ENCODE measurements at regions of chr5 and their contacts with region 1.

Region 1: DNA sequence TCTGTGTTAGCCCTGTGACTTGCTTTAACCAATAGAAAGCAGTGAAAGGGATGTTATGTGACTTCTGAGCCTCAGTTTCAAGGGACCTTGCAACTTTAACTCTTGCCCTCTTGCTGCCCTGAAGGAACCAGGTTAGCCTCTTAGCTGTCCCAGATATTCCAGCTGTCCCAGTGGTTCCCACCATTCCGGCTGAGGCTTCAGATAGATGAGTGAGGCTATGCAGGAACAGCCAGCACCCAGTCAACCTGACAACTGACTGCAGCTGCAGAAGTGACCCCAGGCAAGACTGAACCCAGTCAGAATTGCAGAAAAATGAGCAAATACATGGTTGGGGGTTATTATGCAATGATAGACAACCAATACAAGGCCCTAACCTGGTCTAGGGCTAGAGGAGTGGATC is 10.4 kb upstream of the CDC23 start:
- DNase-seq: no peak
- H3K4me3 ChIP-seq: no peak overlapping the region
- H3K27ac ChIP-seq: no peak overlapping the region
- H3K4me1 ChIP-seq: no peaks in the 10 kb centered on the region
- H3K27me3 ChIP-seq: no peaks in the 10 kb centered on the region; a peak in 1 of 7 replicates
- CTCF ChIP-seq: no peak
- EP300 ChIP-seq: no peak
- POLR2A ChIP-seq: no peak
- RAD21 ChIP-seq: no peak

Region 2: DNA sequence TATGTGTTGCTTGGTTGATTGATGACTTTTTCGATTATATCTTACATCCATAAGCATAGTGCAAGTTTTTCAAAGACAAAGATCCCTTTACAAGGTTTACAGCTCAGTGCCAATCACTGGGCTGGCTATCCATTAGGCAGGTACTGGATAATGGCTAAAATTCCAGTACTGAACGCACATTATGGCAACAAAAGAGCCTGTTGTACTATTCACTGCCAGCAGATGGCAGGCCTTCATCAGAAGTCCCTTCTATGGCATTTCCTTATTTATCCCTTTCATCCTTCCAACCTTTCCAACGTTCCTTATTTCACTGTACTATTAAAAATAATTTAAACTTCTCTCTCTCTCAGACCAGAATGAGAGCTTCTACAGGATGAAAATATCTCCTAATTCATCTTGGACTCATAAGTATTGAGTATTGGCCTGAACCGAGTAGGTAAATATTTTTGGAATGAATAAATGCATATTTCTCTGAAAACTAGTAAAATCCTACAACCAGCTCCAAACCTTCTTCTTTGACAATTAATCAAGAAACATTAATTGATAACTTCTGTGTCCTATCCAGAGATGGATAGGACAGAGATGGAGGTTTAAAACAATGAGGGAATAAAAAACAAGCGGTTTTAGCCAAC is 146.4 kb before region 1 on chr5:
- CTCF ChIA-PET with region 1: no interaction called
- POLR2A ChIA-PET with region 1: no interaction called
- DNase-seq: peak in 1 of 2 experiments; percentile 82
- H3K4me3 ChIP-seq: no peak overlapping the region
- H3K27ac ChIP-seq: no peak overlapping the region
- H3K4me1 ChIP-seq: peaks cover 4 to 10% (median 8%) of the 10 kb centered on the region in 4 experiments; a peak in 4 of 7 replicates
- H3K27me3 ChIP-seq: peaks cover 0 to 2% (median 0%) of the 10 kb centered on the region in 4 experiments; a peak in 1 of 7 replicates
- CTCF ChIP-seq: peak in 2 of 3 experiments; percentile 85 to 87; a peak in 3 of 4 replicates
- EP300 ChIP-seq: no peak; a peak in 1 of 3 replicates
- POLR2A ChIP-seq: no peak
- RAD21 ChIP-seq: peak; percentile 96

Region 3: GRCh38 chr5:138241688-138242571 is 18.4 kb after region 1 on chr5:
- CTCF ChIA-PET with region 1: interaction called, 112 read pairs
- POLR2A ChIA-PET with region 1: no interaction called
- DNase-seq: peak in 1 of 2 experiments; percentile 70
- H3K4me3 ChIP-seq: peak overlapping the region; percentile 29 to 61 (median 45)
- H3K27ac ChIP-seq: no peak overlapping the region
- H3K4me1 ChIP-seq: peaks cover 0 to 6% (median 4%) of the 10 kb centered on the region in 4 experiments; a peak in 5 of 7 replicates
- H3K27me3 ChIP-seq: peaks cover 9 to 26% (median 23%) of the 10 kb centered on the region in 4 experiments
- CTCF ChIP-seq: no peak
- EP300 ChIP-seq: no peak
- POLR2A ChIP-seq: no peak
- RAD21 ChIP-seq: no peak

Region 4: DNA sequence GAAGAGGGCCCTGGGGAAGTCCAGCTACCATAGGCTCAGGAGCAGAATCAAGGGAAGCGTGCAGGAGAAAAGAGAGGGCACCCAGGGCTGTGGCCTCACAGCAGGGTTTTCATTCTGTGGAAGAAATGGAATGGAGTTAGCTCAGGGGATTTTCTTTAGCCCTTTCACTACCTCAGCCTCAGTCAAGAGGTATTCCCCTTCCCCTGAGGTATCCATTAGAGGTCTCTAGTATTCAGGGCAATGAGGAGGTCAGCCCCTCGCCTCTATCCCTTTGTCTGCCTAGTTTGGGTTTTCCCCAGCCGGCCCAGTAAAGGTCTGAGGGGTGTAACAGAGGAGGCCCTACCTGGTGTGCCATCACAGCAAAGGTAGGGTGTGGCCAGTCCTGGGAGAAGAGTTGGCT is 29.4 kb after region 1 on chr5:
- CTCF ChIA-PET with region 1: interaction called, 18 read pairs
- POLR2A ChIA-PET with region 1: no interaction called
- DNase-seq: no peak
- H3K4me3 ChIP-seq: no peak overlapping the region
- H3K27ac ChIP-seq: no peak overlapping the region
- H3K4me1 ChIP-seq: no peaks in the 10 kb centered on the region; a peak in 1 of 7 replicates
- H3K27me3 ChIP-seq: no peaks in the 10 kb centered on the region
- CTCF ChIP-seq: no peak
- EP300 ChIP-seq: no peak
- POLR2A ChIP-seq: no peak
- RAD21 ChIP-seq: no peak

Region 5: GRCh38 chr5:138464008-138464387 is 240.5 kb after region 1 on chr5:
- CTCF ChIA-PET with region 1: no interaction called
- POLR2A ChIA-PET with region 1: no interaction called
- DNase-seq: peak in 1 of 2 experiments; percentile 98
- H3K4me3 ChIP-seq: peak overlapping the region; percentile 81 to 90 (median 88)
- H3K27ac ChIP-seq: peak overlapping the region; percentile 90; the same call in 1 of the 2 replicates
- H3K4me1 ChIP-seq: peaks cover 0 to 11% (median 7%) of the 10 kb centered on the region in 4 experiments; a peak in 6 of 7 replicates
- H3K27me3 ChIP-seq: peaks cover 0 to 15% (median 13%) of the 10 kb centered on the region in 4 experiments; a peak in 5 of 7 replicates
- CTCF ChIP-seq: peak in 2 of 3 experiments; percentile 71 to 73; a peak in 3 of 4 replicates
- EP300 ChIP-seq: peak; percentile 3 to 87; a peak in 2 of 3 replicates
- POLR2A ChIP-seq: no peak; a peak in 1 of 3 replicates
- RAD21 ChIP-seq: peak; percentile 28 to 59; a peak in 3 of 4 replicates